Transverse colon (tissue), 4 donors: ENCODE measurements at regions of chr17 and their contacts with region 1.

Region 1: GRCh38 chr17:66040402-66040801 is 151.5 kb downstream of the CEP112 start:
- DNase-seq: no peak
- H3K4me3 ChIP-seq: no peak overlapping the region
- H3K27ac ChIP-seq: no peak overlapping the region
- H3K4me1 ChIP-seq: peaks cover 0 to 4% (median 0%) of the 10 kb centered on the region in 4 donors
- H3K27me3 ChIP-seq: no peaks in the 10 kb centered on the region
- CTCF ChIP-seq: no peak
- EP300 ChIP-seq: no peak
- POLR2A ChIP-seq: no peak

Region 2: DNA sequence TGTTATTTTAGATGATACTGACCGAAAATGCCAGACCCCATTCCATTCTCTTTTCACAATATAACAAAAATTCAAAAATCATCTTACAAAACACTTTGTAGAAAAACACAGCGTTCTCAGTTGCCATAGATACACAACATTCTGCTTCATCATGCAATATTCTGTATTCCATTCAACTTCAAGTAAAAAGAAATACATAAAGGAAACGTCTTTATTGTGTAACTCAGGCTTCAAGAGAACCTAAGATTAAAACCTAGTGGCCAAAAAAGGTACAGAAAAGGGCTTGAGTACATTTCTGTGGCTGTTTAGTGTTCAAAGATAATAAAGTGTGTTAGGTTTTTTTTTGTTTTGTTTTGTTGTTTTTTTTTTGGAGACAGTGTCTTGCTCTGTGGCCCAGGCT is 99.0 kb before region 1 on chr17:
- in situ Hi-C with region 1: loop called in 1 of 4 experiments (anchors 25 kb)
- intact Hi-C with region 1: no loop called
- DNase-seq: no peak
- H3K4me3 ChIP-seq: no peak overlapping the region
- H3K27ac ChIP-seq: no peak overlapping the region
- H3K4me1 ChIP-seq: no peaks in the 10 kb centered on the region
- H3K27me3 ChIP-seq: no peaks in the 10 kb centered on the region
- CTCF ChIP-seq: no peak
- EP300 ChIP-seq: no peak
- POLR2A ChIP-seq: no peak